Endothelial cell of umbilical vein (primary cell): ENCODE measurements at regions of chr4 and their contacts with region 1.

Region 1: GRCh38 chr4:21512353-21512752 is 436.2 kb downstream of the KCNIP4 start:
- DNase-seq: peak; percentile 71
- H3K4me3 ChIP-seq: no peak overlapping the region
- H3K27ac ChIP-seq: no peak overlapping the region
- H3K4me1 ChIP-seq: no peaks in the 10 kb centered on the region
- H3K27me3 ChIP-seq: peaks cover 34 to 55% of the 10 kb centered on the region in 2 experiments
- CTCF ChIP-seq: peak; percentile 15 to 17
- POLR2A ChIP-seq: no peak

Region 2: DNA sequence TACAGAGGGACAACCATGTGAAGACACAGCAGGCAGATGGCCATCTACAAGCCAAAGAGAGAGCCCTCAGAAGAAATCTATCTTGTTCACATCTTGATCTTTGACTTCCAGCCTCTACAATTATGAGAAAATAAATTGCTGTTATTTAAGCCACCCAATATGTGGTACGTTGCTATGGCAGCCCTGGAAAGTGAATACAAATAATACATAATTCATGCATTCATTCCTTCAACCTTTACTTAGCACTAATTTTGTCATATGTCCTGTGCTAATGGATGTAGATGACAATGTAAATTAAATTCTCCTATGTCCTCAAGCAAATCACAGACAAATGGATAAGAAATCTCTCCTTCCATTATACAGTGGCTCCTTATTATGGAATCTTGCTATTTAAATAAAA is 450.5 kb before region 1 on chr4:
- CTCF ChIA-PET with region 1: no interaction called
- POLR2A ChIA-PET with region 1: no interaction called
- dilution Hi-C with region 1: no loop called
- intact Hi-C with region 1: no loop called
- DNase-seq: no peak
- H3K4me3 ChIP-seq: no peak overlapping the region
- H3K27ac ChIP-seq: no peak overlapping the region
- H3K4me1 ChIP-seq: no peaks in the 10 kb centered on the region
- H3K27me3 ChIP-seq: no peaks in the 10 kb centered on the region
- CTCF ChIP-seq: no peak
- POLR2A ChIP-seq: no peak

Region 3: DNA sequence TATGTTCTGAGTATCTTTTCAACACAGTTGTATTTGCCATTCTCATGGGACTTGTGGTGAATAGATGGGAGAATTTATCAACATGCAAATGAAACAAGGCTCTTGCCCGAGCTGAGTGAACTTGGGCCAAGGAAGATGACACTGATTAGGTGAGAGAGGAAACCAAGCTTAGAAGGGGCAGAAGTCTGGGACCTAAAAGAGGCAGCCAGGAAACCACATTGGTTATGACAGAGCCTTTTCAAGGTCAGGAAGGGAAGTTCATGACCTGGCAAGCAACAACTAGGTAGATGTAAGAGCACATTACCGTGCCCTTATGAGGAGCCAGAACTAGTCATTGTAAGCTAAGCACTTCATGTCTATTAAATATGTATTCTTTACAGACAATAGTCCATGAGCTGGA is 221.8 kb before region 1 on chr4:
- CTCF ChIA-PET with region 1: no interaction called
- POLR2A ChIA-PET with region 1: no interaction called
- dilution Hi-C with region 1: no loop called
- intact Hi-C with region 1: no loop called
- DNase-seq: no peak
- H3K4me3 ChIP-seq: no peak overlapping the region
- H3K27ac ChIP-seq: no peak overlapping the region
- H3K4me1 ChIP-seq: no peaks in the 10 kb centered on the region
- H3K27me3 ChIP-seq: no peaks in the 10 kb centered on the region
- CTCF ChIP-seq: no peak
- POLR2A ChIP-seq: no peak

Region 4: DNA sequence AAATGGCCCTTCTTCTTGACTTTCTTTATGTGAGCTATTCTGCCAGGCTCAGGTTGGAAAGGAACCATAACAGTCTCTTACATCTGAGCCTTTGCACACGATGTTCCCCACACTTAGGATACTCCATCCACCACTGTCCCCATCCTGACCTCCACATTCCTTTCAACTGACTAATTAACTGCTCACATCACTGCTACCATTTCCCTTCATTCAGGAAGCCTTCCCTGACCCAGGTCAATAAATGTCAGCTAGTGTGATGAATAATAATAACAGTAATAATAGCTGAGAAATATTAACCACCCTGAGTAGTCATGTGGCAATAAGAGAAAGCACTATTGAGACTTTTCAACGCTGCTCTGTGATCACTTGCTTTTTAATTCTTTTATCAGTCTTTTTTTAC is 144.5 kb after region 1 on chr4:
- CTCF ChIA-PET with region 1: interaction called, 6 read pairs
- POLR2A ChIA-PET with region 1: no interaction called
- dilution Hi-C with region 1: no loop called
- intact Hi-C with region 1: loop called (anchors 10 kb)
- DNase-seq: peak; percentile 88
- H3K4me3 ChIP-seq: no peak overlapping the region
- H3K27ac ChIP-seq: no peak overlapping the region
- H3K4me1 ChIP-seq: peaks cover 11% of the 10 kb centered on the region
- H3K27me3 ChIP-seq: peaks cover 0 to 2% of the 10 kb centered on the region in 2 experiments
- CTCF ChIP-seq: no peak
- POLR2A ChIP-seq: no peak

Region 5: DNA sequence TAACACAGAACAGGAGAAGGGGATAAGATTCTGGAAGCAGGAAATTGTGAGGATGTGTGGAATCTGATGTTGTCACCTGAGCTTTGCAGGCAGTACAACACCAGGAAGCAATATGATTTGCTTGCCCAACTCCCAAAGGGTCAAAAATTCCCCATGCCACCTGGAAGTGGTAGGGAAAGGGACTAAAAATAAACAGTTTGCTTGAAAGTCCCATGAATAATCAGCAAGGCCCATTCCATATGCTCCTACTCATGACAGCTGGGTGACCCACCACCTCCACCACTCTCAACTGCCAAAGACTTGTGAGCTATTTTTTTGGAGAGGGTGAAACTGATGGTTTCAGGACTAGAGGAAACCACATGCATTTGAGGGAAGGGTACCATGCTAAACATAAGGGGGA is 267.8 kb after region 1 on chr4:
- CTCF ChIA-PET with region 1: no interaction called
- POLR2A ChIA-PET with region 1: interaction called, 12 read pairs
- dilution Hi-C with region 1: no loop called
- intact Hi-C with region 1: no loop called
- DNase-seq: no peak
- H3K4me3 ChIP-seq: no peak overlapping the region
- H3K27ac ChIP-seq: no peak overlapping the region
- H3K4me1 ChIP-seq: peaks cover 13% of the 10 kb centered on the region
- H3K27me3 ChIP-seq: peaks cover 2 to 15% of the 10 kb centered on the region in 2 experiments
- CTCF ChIP-seq: no peak
- POLR2A ChIP-seq: no peak

Region 6: GRCh38 chr4:22688236-22688635 is 1175.9 kb after region 1 on chr4:
- CTCF ChIA-PET with region 1: no interaction called
- POLR2A ChIA-PET with region 1: no interaction called
- dilution Hi-C with region 1: no loop called
- intact Hi-C with region 1: loop called (anchors 5 kb)
- DNase-seq: no peak
- H3K4me3 ChIP-seq: no peak overlapping the region
- H3K27ac ChIP-seq: no peak overlapping the region
- H3K4me1 ChIP-seq: no peaks in the 10 kb centered on the region
- H3K27me3 ChIP-seq: no peaks in the 10 kb centered on the region
- CTCF ChIP-seq: no peak
- POLR2A ChIP-seq: no peak